ENCODE measurements at regions of chr2 and their contacts with region 1.

Region 1: DNA sequence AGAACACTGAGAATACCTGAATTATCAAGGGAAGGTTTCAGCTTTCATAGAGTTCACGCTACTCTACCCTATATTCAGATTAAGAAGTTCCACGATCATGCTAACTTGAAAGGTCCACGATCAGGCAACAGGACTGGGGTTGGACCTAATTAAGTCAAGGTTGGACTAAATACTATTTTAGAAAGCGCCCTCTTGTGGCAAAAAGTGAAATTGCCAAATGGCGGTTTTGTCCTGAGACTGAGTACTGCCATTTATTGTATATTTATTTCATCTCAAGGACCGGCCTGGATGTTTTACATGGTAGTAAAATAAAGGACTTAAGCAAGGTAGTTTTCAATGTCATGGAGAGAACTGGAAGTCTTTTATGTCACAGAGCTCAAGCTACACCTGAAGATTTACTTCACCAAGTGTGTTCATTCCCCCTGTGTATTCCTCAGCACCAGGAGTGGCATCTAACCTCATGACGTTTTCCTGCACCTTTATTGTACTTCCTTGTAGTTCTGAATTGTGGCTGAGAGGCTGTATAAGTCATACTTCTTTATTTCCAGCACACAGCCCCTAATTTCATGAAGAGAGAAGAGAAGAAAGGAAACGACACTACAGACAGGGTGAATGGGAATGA is 56.8 kb downstream of the SRD5A2 start:
- DNase-seq: peak; percentile 44
- H3K4me3 ChIP-seq: no peak overlapping the region; a peak in 1 of 4 replicates
- H3K27ac ChIP-seq: no peak overlapping the region
- H3K4me1 ChIP-seq: no peaks in the 10 kb centered on the region
- H3K27me3 ChIP-seq: peaks cover 20% of the 10 kb centered on the region; the same call in 1 of the 2 replicates
- CTCF ChIP-seq: peak; percentile 95
- EP300 ChIP-seq: no peak
- RAD21 ChIP-seq: peak; percentile 59

Region 2: DNA sequence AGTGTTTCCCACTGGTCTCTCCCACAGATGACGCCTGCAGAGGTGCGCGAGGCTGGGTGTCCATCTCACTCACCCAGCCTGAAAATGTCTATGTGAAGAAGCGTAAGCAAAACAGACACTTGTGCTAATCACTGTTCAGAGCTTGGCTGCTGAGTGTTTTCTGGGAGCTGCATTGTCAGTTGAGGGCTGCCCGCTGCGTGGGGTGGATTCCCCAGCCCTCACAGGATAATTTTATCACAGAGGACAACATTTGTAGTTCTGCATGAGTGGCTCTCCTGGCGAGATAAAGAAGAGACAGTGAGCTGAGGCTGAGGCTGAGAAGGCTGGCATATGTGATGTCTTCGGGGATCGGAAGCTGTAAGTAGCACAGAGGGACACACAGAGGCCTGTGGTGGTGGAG is 700.5 kb before region 1 on chr2:
- CTCF ChIA-PET with region 1: no interaction called
- POLR2A ChIA-PET with region 1: no interaction called
- DNase-seq: peak; percentile 38
- H3K4me3 ChIP-seq: no peak overlapping the region
- H3K27ac ChIP-seq: peak overlapping the region in 1 of 2 experiments; percentile 62; a peak in 2 of 4 replicates
- H3K4me1 ChIP-seq: peaks cover 0 to 6% of the 10 kb centered on the region in 2 experiments; a peak in 1 of 4 replicates
- H3K27me3 ChIP-seq: no peaks in the 10 kb centered on the region
- CTCF ChIP-seq: no peak
- EP300 ChIP-seq: no peak
- RAD21 ChIP-seq: no peak; the same call in 1 of the 2 replicates

Region 3: DNA sequence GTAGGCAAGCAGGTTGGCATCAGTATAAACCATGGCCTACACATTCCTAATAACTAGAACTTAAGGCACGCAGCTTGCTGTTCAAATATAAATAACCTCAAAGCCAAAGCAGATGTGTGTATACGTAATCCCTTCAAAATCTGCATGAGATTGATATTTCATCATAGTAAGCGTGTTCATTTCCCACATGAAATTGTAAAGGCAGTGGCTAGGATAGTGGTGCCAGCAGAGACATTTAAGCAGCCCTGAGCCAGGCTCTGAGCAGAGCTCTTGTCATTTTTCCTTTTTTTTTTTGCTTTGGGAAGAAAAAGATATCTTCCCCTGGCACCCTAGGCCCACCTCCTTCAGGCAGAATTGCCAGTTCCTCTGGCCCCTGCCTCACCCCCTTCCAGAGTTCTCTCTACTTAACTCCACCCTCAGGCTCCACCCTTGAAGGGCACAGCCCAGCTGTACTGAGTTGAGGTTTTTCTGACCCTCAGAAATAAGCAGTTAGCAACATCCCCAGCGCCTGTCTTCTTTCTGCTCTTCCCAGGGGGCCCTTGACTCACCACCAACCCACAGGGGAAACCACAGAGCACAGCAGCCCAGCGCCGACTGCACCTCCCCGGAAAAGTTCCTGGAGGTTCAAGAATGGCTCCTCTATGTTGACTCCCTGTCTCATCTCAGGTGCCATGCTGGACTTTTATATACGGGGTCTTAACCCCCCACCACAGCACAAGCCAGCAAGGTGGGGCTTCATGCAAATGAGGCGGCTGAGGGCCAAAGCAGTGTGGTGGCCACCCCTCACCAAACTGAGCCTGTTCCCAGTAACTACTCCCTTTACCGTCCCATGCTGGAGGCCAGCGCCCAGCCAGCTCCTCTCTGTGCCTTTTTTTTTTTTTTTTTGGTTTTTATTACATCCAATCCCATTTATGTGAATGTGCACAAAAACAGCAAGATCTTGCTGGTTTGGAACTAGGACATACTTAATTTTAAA is 205.3 kb before region 1 on chr2:
- CTCF ChIA-PET with region 1: no interaction called
- POLR2A ChIA-PET with region 1: no interaction called
- DNase-seq: no peak
- H3K4me3 ChIP-seq: no peak overlapping the region
- H3K27ac ChIP-seq: peak overlapping the region; percentile 4 to 67; a peak in 1 of 4 replicates
- H3K4me1 ChIP-seq: peaks cover 18 to 25% of the 10 kb centered on the region in 2 experiments
- H3K27me3 ChIP-seq: no peaks in the 10 kb centered on the region
- CTCF ChIP-seq: no peak
- EP300 ChIP-seq: peak in 1 of 2 experiments; percentile 32; a peak in 1 of 4 replicates
- RAD21 ChIP-seq: no peak

Region 4: DNA sequence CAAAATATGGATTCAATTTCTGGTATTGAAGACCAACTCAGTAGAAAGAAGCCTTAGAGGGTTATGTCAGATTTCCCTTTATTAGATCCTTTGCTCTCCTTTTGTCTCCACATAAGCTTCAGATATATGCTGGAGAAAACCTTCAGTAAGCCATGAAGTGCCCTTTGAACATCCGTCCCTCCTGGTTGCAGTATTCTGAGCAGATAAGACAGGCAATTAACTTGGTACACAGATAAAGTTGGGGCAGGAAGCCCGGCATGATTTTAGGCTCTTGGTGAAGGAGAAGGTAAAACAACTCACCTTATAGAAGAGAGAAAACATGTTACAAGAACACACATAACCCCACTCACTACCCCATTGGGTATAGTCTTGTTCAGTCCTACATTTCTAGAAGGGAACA is 19.7 kb before region 1 on chr2:
- CTCF ChIA-PET with region 1: interaction called, 17 read pairs
- POLR2A ChIA-PET with region 1: no interaction called
- DNase-seq: no peak
- H3K4me3 ChIP-seq: no peak overlapping the region
- H3K27ac ChIP-seq: no peak overlapping the region
- H3K4me1 ChIP-seq: no peaks in the 10 kb centered on the region
- H3K27me3 ChIP-seq: no peaks in the 10 kb centered on the region
- CTCF ChIP-seq: no peak
- EP300 ChIP-seq: no peak
- RAD21 ChIP-seq: no peak

Region 5: DNA sequence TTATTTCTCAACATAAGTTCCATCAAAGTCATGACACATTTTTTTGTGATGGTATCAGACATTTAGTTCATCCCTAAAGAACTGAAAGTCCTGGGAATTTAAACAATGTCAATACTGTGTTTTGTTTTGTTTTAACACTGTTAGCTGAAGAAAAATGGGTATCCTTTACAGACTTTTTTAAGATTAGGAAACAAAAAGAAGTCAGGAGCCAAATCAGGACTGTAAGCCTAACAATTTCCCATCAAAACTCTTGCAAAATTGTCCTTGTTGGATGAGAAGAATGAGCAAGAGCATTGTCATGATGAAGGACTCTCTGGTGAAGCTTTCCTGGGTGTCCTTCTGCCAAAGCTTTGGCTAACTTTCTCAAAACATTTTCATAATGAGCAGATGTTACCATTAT is 12.6 kb before region 1 on chr2:
- CTCF ChIA-PET with region 1: interaction called, 17 read pairs
- POLR2A ChIA-PET with region 1: no interaction called
- DNase-seq: no peak
- H3K4me3 ChIP-seq: no peak overlapping the region
- H3K27ac ChIP-seq: no peak overlapping the region
- H3K4me1 ChIP-seq: no peaks in the 10 kb centered on the region
- H3K27me3 ChIP-seq: no peaks in the 10 kb centered on the region
- CTCF ChIP-seq: no peak
- EP300 ChIP-seq: no peak
- RAD21 ChIP-seq: no peak

Region 6: GRCh38 chr2:31877008-31877407 is 353.0 kb after region 1 on chr2:
- CTCF ChIA-PET with region 1: no interaction called
- POLR2A ChIA-PET with region 1: no interaction called
- DNase-seq: no peak
- H3K4me3 ChIP-seq: no peak overlapping the region
- H3K27ac ChIP-seq: no peak overlapping the region
- H3K4me1 ChIP-seq: no peaks in the 10 kb centered on the region; a peak in 1 of 4 replicates
- H3K27me3 ChIP-seq: no peaks in the 10 kb centered on the region
- CTCF ChIP-seq: no peak
- EP300 ChIP-seq: no peak
- RAD21 ChIP-seq: no peak

Measured in SK-N-SH (cell line).